ENCODE measurements at regions of chr11 and their contacts with region 1.

Region 1: DNA sequence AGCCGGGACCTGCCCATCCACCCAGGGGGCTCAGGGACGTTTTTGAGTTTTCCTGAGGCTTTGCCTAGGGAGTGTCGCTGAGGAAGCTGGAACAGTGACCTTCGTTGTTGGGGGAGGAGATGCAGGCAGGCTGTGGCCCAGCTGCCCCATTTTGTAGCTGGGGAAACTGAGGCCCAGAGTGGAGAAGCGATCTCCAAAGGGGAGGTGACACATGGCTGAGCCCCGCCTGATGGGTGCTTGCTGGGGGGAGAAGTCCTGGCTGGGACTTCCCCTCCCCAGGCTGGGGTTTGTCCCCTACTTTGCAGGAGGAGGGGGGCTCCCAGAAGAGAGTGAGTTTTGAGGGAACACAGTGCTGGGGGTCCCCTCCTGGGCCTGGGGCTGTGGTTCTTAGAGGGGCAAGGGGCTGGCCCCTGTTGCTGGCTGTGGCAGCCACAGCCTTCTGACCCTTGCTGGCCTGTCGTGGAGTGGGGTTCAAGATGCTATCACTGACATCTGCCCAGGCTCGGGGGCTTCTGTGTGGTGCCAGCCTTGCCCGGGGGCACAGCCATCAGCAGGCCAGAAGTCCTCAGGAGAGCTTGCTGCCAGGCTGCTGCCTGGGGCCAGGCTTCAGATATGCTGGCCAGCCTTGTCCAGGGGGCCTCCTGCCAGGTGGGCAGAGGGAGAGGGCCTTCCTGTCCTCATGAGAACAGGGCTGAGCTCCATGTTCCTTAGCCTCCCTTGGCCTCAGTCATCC is 21.4 kb downstream of the KCNQ1 start:
- DNase-seq: no peak
- ATAC-seq: no peak
- H3K4me3 ChIP-seq: no peak overlapping the region
- H3K27ac ChIP-seq: no peak overlapping the region
- H3K4me1 ChIP-seq: no peaks in the 10 kb centered on the region
- H3K27me3 ChIP-seq: peaks cover 38% of the 10 kb centered on the region
- CTCF ChIP-seq: no peak
- POLR2A ChIP-seq: no peak
- RAD21 ChIP-seq: no peak

Region 2: DNA sequence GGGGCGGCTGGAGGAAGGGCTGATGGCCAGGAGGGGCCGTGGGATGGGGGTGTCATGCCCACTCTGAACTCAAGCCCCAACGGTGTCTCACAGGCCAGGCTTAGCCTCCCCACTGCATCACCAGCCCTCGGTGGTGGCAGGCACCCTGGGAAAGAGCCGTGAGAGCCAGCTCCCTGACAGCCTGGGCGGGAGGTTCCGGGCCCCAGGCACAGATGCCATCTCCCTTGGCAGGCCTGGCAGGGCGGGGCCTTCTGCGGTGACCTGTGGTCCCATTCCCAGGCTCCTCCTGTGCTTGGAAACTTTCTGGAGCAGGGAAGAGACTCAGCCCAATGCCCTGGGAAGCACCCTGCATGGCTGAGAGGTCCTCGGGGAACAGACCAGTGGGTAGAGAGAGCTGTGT is 458.1 kb after region 1 on chr11:
- CTCF ChIA-PET with region 1: no interaction called
- POLR2A ChIA-PET with region 1: interaction called, 10 read pairs
- dilution Hi-C with region 1: no loop called
- in situ Hi-C with region 1: no loop called
- intact Hi-C with region 1: no loop called
- DNase-seq: no peak
- ATAC-seq: no peak
- H3K4me3 ChIP-seq: no peak overlapping the region
- H3K27ac ChIP-seq: no peak overlapping the region
- H3K4me1 ChIP-seq: peaks cover 6% of the 10 kb centered on the region
- H3K27me3 ChIP-seq: no peaks in the 10 kb centered on the region
- CTCF ChIP-seq: no peak
- POLR2A ChIP-seq: no peak
- RAD21 ChIP-seq: no peak